ENCODE measurements at regions of chr17 and their contacts with region 1.

Region 1: GRCh38 chr17:39980351-39981206 is at the start of gene PSMD3:
- DNase-seq: peak; percentile 99
- H3K4me3 Mint-ChIP-seq: peak within 1 kb of the TSS; percentile 93
- H3K27ac Mint-ChIP-seq: peak within 1 kb of the TSS; percentile 74
- H3K4me1 Mint-ChIP-seq: peaks cover 27% of the 10 kb centered on the region
- H3K27me3 Mint-ChIP-seq: peaks cover 7% of the 10 kb centered on the region
- total RNA-seq, gene PSMD3: 193 and 196 TPM in 2 replicates

Region 2: DNA sequence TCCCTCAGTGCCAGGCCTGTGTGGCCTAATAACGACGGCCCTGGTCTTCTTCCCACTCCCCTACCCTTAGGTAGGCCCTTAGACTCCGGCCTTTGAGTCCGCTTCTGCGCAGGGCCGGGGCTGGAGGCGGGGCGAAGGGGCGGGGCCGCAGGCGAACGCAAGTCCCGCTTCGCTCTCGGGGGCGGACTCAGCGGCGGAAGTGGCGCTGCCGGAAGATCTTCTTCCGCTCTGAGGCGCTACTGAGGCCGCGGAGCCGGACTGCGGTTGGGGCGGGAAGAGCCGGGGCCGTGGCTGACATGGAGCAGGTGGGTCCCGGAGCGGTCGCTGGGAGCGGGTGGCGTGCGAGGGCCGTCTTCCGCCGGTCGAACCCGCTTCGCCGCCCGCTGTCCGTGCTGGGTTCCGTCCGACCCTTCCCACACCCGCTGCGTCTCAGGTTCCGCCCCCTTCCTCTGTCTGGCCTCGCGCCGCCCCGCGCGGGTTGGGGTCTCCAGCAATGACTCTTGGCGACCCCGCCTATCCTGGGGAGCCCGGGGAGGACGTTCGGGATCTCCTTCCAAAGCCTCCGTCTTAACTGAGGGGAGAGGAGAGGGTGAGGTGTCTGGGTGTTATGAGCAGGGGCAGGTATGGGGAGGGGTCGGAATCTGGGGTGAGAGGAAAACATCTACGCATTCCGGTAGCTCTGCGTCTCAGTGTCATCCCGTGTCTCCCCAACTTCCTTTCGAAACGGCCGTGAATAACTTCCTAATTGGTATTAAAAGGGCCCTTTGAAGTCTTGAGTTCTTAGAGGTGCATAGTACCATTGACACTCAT is 343.4 kb before region 1 on chr17 and contains the start of gene STARD3:
- intact Hi-C with region 1: loop called (anchors 2 kb)
- DNase-seq: peak; percentile 86
- H3K4me3 Mint-ChIP-seq: peak within 1 kb of the TSS; percentile 92
- H3K27ac Mint-ChIP-seq: peak within 1 kb of the TSS; percentile 71
- H3K4me1 Mint-ChIP-seq: peaks cover 24% of the 10 kb centered on the region
- H3K27me3 Mint-ChIP-seq: no peaks in the 10 kb centered on the region
- total RNA-seq, gene STARD3: 51.5 and 54.4 TPM in 2 replicates

Region 3: GRCh38 chr17:39754161-39754951 is 226.2 kb before region 1 on chr17:
- intact Hi-C with region 1: loop called (anchors 5 kb)
- DNase-seq: peak; percentile 98
- H3K4me3 Mint-ChIP-seq: peak overlapping the region; percentile 19
- H3K27ac Mint-ChIP-seq: peak overlapping the region; percentile 56
- H3K4me1 Mint-ChIP-seq: peaks cover 52% of the 10 kb centered on the region
- H3K27me3 Mint-ChIP-seq: no peaks in the 10 kb centered on the region

Region 4: DNA sequence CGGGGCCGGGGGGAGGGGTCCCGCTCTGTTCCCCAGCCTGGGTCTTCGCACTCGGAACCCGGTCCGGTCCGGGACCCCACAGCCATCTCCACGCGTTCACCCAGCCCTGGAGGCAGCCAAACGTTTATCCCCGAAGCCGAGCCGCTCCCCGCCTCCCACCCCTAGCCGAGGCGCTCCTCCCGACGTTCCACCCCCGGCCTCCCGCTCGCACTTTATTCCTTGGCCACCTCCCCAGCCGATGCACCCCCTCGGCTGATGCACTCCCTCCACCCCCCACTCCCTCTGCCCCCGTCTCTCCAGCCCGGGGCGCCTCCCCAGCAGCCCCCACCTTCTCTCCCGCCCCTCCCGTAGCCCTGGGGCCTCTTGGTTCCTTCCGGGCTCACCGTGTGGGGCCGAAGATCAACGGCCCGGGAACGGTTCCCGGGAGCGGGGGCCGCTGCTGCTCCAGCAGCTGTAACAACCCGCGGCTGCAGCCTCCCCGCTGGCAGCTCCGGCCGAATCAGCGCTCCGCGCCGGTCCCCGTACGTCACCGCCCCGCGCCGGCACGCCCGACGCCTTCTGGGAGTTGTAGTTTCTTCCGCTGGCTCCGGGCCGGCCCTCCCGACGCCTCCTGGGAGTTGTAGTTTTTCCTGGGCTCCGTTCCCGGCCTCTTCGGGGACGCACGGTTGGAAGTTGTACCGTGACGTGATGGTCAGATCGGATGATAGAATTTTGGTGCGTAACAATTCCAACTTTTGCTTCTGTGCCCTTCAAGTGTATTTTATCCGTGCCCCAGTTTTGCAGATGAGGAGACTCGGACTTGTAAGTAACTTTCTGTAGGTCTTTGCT is 53.3 kb before region 1 on chr17 and contains the starts of genes LRRC3C and ORMDL3:
- intact Hi-C with region 1: loop called (anchors 5 kb)
- DNase-seq: peak; percentile 89
- H3K4me3 Mint-ChIP-seq: peak within 1 kb of the TSS; percentile 86
- H3K27ac Mint-ChIP-seq: peak within 1 kb of the TSS; percentile 89
- H3K4me1 Mint-ChIP-seq: peaks cover 41% of the 10 kb centered on the region
- H3K27me3 Mint-ChIP-seq: no peaks in the 10 kb centered on the region
- total RNA-seq, gene LRRC3C: not detected in 2 replicates
- total RNA-seq, gene ORMDL3: 66.1 and 74.3 TPM in 2 replicates

Region 5: DNA sequence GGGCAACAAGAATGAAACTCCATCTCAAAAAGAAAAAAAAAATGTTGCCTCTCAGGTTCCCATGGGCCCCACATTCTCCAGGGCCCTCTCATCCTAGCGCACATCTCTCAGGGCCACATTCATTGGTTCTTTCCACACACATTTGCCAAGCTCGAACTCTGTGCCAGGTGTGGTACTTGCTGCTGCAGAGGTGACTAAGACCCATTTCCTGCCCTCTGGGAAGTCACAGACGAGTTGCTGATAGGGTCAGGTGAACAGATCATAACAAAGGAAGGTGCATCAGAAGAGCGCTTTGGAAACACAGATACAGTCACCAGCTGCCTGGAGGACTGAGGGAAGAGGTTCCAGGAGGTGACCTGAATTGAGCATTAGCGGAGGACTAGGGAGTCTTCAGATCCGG is 16.8 kb before region 1 on chr17:
- intact Hi-C with region 1: loop called (anchors 1 kb)
- DNase-seq: no peak
- H3K4me3 Mint-ChIP-seq: no peak overlapping the region
- H3K27ac Mint-ChIP-seq: no peak overlapping the region
- H3K4me1 Mint-ChIP-seq: peaks cover 16% of the 10 kb centered on the region
- H3K27me3 Mint-ChIP-seq: peaks cover 3% of the 10 kb centered on the region